CD8-positive, alpha-beta T cell (primary cell): ENCODE measurements at regions of chr1 and their contacts with region 1.

Region 1: DNA sequence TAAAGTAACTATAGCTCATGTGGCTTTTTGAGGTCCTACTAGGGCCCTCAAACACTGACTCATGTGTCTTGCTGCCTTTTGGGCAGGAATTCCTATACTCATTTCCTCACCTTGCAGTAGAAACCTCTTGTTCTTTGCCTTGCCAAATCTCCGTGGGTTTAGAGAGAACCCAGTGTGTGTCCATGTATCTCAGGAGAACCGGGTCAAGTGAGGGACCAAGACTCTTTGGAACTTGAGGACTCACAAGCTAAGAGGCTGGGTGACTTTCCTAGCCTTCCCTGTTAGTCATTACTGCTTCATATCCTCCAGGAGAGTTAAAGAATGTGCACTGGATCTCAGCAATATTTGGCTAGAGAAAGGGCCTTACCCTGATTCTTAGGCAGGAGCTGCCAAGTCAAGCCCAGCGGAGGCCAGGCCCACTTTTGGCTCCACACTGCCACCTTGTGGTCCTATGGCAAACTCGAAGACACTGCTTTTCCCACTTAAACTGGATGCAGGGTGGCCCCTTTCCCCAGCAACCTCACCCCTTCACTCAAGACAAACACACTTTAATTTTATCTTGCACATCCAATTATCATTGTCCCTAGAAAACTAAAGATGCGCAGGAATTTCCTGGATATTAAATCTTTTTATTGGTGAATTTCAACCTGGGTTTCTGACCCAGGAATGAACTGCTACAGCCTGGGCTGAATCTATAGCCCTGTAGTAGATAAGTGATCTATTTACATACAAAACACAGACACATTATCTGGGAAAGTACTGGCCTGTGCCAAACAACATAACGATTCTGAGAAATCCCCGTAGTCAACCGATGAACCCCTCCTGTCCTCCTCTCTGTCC is 10.6 kb downstream of the AVPR1B start:
- DNase-seq: peak; percentile 56 to 85 (median 73)
- ATAC-seq: peak; percentile 79
- H3K4me3 ChIP-seq: no peak overlapping the region
- H3K4me3 Mint-ChIP-seq: no peak overlapping the region
- H3K27ac ChIP-seq: no peak overlapping the region
- H3K27ac Mint-ChIP-seq: no peak overlapping the region
- H3K4me1 ChIP-seq: no peaks in the 10 kb centered on the region
- H3K4me1 Mint-ChIP-seq: no peaks in the 10 kb centered on the region
- H3K27me3 ChIP-seq: no peaks in the 10 kb centered on the region
- H3K27me3 Mint-ChIP-seq: peaks cover under 1% of the 10 kb centered on the region
- CTCF ChIP-seq: peak; percentile 71

Region 2: DNA sequence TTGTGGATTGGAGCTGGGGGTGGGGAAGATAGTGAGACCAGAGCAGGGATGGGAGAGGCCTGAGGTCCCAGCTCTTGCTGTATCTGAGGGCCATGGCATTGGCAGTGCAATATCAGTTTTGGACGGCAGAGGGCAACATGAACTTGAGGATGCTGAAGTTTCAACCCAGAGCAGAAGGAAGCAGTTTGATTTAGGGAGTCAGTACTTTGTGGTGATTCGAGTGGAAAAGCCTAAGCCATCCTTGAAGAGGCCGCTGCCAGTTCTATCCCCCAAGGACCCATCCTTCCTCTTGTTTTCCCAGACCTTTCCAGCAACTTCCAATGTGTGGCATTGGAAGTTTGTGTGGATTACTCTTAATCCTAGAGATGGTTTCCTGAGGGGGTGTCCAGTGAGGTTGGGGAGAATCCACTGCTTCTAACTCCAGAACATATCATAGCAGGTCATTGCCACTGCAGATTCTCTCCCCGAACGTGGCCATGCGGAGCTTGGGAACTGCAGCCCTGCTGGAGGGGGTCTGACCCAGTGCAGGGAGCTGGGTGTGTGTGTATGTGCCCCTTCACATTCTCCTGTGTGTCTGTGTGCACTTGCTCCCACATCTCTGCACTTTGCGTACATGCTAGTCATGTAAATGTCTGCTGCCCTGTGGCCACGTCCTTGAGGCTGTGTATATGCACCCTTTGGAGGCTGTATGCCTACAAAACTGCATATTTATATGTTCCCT is 187.4 kb before region 1 on chr1:
- CTCF ChIA-PET with region 1: interaction called, 15 read pairs
- POLR2A ChIA-PET with region 1: no interaction called
- intact Hi-C with region 1: loop called in 1 of 2 experiments (anchors 1 kb)
- DNase-seq: peak; percentile 42 to 75 (median 64)
- ATAC-seq: peak; percentile 63
- H3K4me3 ChIP-seq: no peak overlapping the region
- H3K4me3 Mint-ChIP-seq: no peak overlapping the region
- H3K27ac ChIP-seq: no peak overlapping the region
- H3K27ac Mint-ChIP-seq: no peak overlapping the region
- H3K4me1 ChIP-seq: no peaks in the 10 kb centered on the region
- H3K4me1 Mint-ChIP-seq: no peaks in the 10 kb centered on the region
- H3K27me3 ChIP-seq: no peaks in the 10 kb centered on the region
- H3K27me3 Mint-ChIP-seq: peaks cover 10% of the 10 kb centered on the region
- CTCF ChIP-seq: peak; percentile 75

Region 3: DNA sequence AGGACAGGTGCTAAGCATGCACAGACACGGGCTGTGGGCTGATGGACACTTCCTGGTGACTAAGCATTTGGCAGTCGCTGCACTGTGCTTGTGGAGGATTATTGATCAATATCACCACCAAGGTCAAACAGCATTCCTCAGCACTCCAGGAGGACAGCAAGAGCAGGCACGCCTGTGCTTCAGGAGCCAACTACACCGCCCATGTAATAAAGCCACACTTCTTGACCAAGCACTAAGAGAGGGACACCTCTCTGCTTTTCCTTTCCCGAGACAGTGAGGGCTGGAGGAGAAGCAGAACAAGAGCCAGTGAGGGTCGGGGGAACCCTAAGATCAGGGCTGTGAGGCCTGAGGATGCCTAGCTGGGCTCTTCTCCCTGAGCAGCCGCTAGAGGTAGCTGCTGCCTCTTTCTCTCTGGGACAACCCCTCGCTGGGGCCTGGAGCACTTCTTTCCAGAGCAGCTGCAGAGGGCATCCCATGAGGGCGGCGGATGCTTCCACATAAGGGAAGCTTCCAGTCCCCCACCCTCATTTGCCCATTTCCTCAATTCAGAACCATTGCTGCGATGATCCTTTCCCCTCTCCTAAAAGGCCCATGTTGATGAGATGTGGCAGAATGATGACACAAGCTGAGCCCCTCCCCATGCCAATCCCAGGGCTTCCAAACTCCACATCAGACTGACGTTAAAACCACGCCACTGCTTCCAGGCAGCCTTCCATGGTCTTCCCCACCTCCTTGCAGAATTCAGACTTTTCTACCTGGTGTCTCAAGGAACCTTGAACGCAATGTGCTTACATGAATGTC is 122.4 kb before region 1 on chr1:
- CTCF ChIA-PET with region 1: interaction called, 6 read pairs
- POLR2A ChIA-PET with region 1: no interaction called
- intact Hi-C with region 1: loop called (anchors 2 kb)
- DNase-seq: peak in 1 of 9 experiments; percentile 19
- ATAC-seq: no peak
- H3K4me3 ChIP-seq: no peak overlapping the region
- H3K4me3 Mint-ChIP-seq: no peak overlapping the region
- H3K27ac ChIP-seq: no peak overlapping the region
- H3K27ac Mint-ChIP-seq: no peak overlapping the region
- H3K4me1 ChIP-seq: no peaks in the 10 kb centered on the region
- H3K4me1 Mint-ChIP-seq: no peaks in the 10 kb centered on the region
- H3K27me3 ChIP-seq: no peaks in the 10 kb centered on the region
- H3K27me3 Mint-ChIP-seq: no peaks in the 10 kb centered on the region
- CTCF ChIP-seq: no peak

Region 4: GRCh38 chr1:206030714-206031113 is 75.8 kb before region 1 on chr1:
- CTCF ChIA-PET with region 1: interaction called, 103 read pairs
- POLR2A ChIA-PET with region 1: no interaction called
- intact Hi-C with region 1: loop called in 1 of 2 experiments (anchors 1 kb)
- DNase-seq: peak in 8 of 9 experiments; percentile 42 to 75 (median 58)
- ATAC-seq: peak; percentile 57
- H3K4me3 ChIP-seq: no peak overlapping the region
- H3K4me3 Mint-ChIP-seq: no peak overlapping the region
- H3K27ac ChIP-seq: no peak overlapping the region
- H3K27ac Mint-ChIP-seq: no peak overlapping the region
- H3K4me1 ChIP-seq: no peaks in the 10 kb centered on the region
- H3K4me1 Mint-ChIP-seq: peaks cover 9% of the 10 kb centered on the region
- H3K27me3 ChIP-seq: no peaks in the 10 kb centered on the region
- H3K27me3 Mint-ChIP-seq: peaks cover 13% of the 10 kb centered on the region
- CTCF ChIP-seq: peak; percentile 63

Region 5: DNA sequence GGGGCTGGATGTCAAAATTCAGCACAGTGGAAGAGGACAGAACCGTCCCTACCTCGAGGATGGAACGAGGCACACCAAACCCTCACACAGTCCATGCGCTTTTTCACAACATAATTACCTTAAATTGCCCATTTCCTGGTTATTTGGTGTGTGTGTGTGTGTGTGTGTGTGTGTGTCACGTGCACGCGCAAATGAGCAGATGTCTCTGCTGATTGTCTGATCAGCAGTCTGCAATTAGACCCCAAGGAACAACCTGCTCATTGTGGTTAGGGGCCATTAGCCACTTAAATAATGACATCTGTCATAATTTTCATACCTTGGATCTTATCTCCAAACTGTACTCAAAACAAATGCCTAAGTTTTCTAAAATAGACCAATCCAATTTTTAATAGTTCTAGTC is 12.5 kb before region 1 on chr1:
- CTCF ChIA-PET with region 1: interaction called, 23 read pairs
- POLR2A ChIA-PET with region 1: interaction called, 4 read pairs
- intact Hi-C with region 1: no loop called
- DNase-seq: no peak
- ATAC-seq: no peak
- H3K4me3 ChIP-seq: no peak overlapping the region
- H3K4me3 Mint-ChIP-seq: no peak overlapping the region
- H3K27ac ChIP-seq: no peak overlapping the region
- H3K27ac Mint-ChIP-seq: no peak overlapping the region
- H3K4me1 ChIP-seq: no peaks in the 10 kb centered on the region
- H3K4me1 Mint-ChIP-seq: no peaks in the 10 kb centered on the region
- H3K27me3 ChIP-seq: peaks cover 0 to 6% of the 10 kb centered on the region in 2 experiments
- H3K27me3 Mint-ChIP-seq: peaks cover 17% of the 10 kb centered on the region
- CTCF ChIP-seq: no peak